Naive thymus-derived CD8-positive, alpha-beta T cell (primary cell): ENCODE measurements at regions of chr15 and their contacts with region 1.

Region 1: DNA sequence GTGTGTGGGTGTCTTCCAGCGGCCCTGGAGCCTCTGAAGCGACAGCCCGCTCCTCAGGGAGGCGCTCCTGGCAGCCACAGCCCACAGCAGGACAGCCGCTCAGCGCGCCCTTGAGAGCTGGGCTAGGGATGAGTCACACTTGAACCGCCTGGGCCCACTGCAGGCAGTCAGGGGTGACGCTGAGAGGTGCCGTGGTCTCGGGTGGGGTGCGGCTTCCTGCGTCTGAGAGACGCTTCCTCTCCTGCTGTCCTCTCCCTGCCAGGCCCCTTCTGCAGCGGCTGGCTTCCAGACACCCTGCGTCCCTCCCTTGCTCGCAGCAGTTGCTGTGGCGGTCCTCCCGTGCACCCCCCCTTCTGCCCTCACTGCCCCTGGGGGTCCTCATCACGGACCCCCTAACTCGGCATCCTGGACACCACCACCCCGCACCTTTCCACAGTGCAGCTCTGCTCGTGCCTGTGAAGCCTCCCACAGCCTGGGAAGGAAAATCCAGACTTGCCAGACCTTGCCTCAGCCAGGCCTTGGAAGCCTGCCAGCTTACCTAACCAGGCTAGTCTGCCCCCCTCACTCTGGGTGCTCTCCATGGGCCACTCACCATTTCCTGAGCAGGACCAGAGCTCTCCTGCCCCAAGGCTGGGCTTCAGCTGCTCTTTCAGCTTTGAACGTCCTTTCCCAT is 1.1 kb upstream of the SPTBN5 start:
- DNase-seq: peak; percentile 73 to 94 (median 86)
- ATAC-seq: peak; percentile 97
- H3K4me3 Mint-ChIP-seq: peak overlapping the region; percentile 69 to 90 (median 78)
- H3K27ac Mint-ChIP-seq: peak overlapping the region; percentile 93 to 100 (median 98)
- H3K4me1 Mint-ChIP-seq: peaks cover 17 to 54% (median 39%) of the 10 kb centered on the region in 4 donors
- H3K27me3 Mint-ChIP-seq: no peaks in the 10 kb centered on the region

Region 2: GRCh38 chr15:41827880-41828806 is 66.8 kb before region 1 on chr15 and contains the start of gene JMJD7:
- POLR2A ChIA-PET with region 1: interaction called, 11 read pairs
- DNase-seq: peak; percentile 86 to 99 (median 92)
- ATAC-seq: peak; percentile 85 to 88
- H3K4me3 Mint-ChIP-seq: peak within 1 kb of the TSS; percentile 86 to 98 (median 94)
- H3K27ac Mint-ChIP-seq: peak within 1 kb of the TSS; percentile 63 to 96 (median 91)
- H3K4me1 Mint-ChIP-seq: peaks cover 22 to 56% (median 50%) of the 10 kb centered on the region in 4 donors
- H3K27me3 Mint-ChIP-seq: no peaks in the 10 kb centered on the region
- polyA plus RNA-seq, gene JMJD7: 19.1 to 22.6 (median 20.8) TPM

Region 3: GRCh38 chr15:41936649-41937567 is 42.0 kb after region 1 on chr15:
- POLR2A ChIA-PET with region 1: interaction called, 18 read pairs
- DNase-seq: peak; percentile 35 to 85 (median 70)
- ATAC-seq: peak; percentile 86 to 89
- H3K4me3 Mint-ChIP-seq: peak overlapping the region; percentile 20 to 89 (median 76)
- H3K27ac Mint-ChIP-seq: peak overlapping the region; percentile 93 to 100 (median 98)
- H3K4me1 Mint-ChIP-seq: peaks cover 27 to 69% (median 56%) of the 10 kb centered on the region in 4 donors
- H3K27me3 Mint-ChIP-seq: no peaks in the 10 kb centered on the region

Region 4: GRCh38 chr15:41972253-41973242 is 77.6 kb after region 1 on chr15 and contains the start of gene EHD4:
- POLR2A ChIA-PET with region 1: interaction called, 13 read pairs
- DNase-seq: peak; percentile 85 to 98 (median 93)
- ATAC-seq: peak; percentile 79 to 84
- H3K4me3 Mint-ChIP-seq: peak within 1 kb of the TSS; percentile 87 to 96 (median 93)
- H3K27ac Mint-ChIP-seq: peak within 1 kb of the TSS; percentile 84 to 98 (median 96)
- H3K4me1 Mint-ChIP-seq: peaks cover 18 to 48% (median 41%) of the 10 kb centered on the region in 4 donors
- H3K27me3 Mint-ChIP-seq: peaks cover 3 to 26% (median 8%) of the 10 kb centered on the region in 5 donors
- polyA plus RNA-seq, gene EHD4: 5.2 to 7.6 (median 5.9) TPM